ENCODE measurements at regions of chr13 and their contacts with region 1.

Region 1: DNA sequence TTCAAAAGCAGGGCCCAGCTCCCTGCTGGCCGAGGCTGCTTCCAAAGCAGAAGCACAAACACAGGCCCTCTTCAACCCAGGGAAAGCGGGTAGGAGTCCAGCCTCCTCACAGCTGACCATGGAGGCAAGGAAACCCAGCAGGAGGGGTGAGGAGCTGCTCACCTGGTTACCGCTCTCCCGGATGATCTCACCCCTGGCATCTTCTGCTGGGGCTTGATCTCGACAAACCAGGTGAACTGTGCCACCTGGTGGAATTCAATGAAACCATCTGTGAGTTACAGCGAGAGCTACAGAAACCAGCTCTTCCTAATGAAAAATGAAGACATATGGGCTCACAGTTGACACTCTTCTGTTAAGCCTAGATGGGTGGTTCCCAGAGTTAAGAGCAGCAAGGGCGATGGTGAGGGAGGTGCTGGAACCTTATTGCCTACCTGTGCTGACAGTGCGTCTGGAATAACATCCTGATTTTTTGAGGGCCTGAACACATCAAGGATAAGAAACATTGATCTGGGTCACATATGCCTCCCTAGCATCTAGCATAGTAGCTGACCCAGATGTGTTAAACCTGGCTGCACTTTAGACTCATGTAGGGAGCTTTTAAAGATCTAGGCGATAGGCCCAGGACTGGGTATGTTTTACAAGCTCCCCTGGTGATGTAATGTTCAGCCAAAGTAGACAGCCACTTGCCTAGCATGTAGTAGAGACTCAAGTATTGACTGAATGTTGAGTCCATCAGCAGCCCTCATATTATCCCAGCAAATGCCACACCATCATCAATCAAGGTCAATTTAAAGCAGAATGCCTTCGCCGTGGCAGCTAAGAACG is 6.1 kb downstream of the DHRS12 start:
- DNase-seq: no peak
- ATAC-seq: peak; percentile 67
- H3K4me3 ChIP-seq: no peak overlapping the region
- H3K27ac ChIP-seq: no peak overlapping the region
- H3K4me1 ChIP-seq: peaks cover 39% of the 10 kb centered on the region
- H3K27me3 ChIP-seq: no peaks in the 10 kb centered on the region
- CTCF ChIP-seq: peak; percentile 62 to 84 (median 69); a peak in 5 of 6 replicates
- EP300 ChIP-seq: no peak
- POLR2A ChIP-seq: no peak
- RAD21 ChIP-seq: peak; percentile 93

Region 2: GRCh38 chr13:51262501-51263211 is 535.2 kb before region 1 on chr13:
- CTCF ChIA-PET with region 1: interaction called, 17 read pairs
- POLR2A ChIA-PET with region 1: no interaction called
- RAD21 ChIA-PET with region 1: interaction called, 4 read pairs
- SMC1A ChIA-PET with region 1: interaction called, 5 read pairs
- in situ Hi-C with region 1: no loop called
- intact Hi-C with region 1: no loop called
- DNase-seq: no peak
- ATAC-seq: peak; percentile 79
- H3K4me3 ChIP-seq: no peak overlapping the region
- H3K27ac ChIP-seq: no peak overlapping the region
- H3K4me1 ChIP-seq: no peaks in the 10 kb centered on the region
- H3K27me3 ChIP-seq: 0 out of 4 replicates have a peak, but pooled peaks cover 0 to 3% of the 10 kb centered on the region in 2 experiments
- CTCF ChIP-seq: peak in 2 of 3 experiments; percentile 27 to 34; a peak in 3 of 6 replicates
- EP300 ChIP-seq: no peak
- POLR2A ChIP-seq: no peak
- RAD21 ChIP-seq: 0 out of 2 replicates have a peak, but pooled peaks have one; percentile 22

Region 3: DNA sequence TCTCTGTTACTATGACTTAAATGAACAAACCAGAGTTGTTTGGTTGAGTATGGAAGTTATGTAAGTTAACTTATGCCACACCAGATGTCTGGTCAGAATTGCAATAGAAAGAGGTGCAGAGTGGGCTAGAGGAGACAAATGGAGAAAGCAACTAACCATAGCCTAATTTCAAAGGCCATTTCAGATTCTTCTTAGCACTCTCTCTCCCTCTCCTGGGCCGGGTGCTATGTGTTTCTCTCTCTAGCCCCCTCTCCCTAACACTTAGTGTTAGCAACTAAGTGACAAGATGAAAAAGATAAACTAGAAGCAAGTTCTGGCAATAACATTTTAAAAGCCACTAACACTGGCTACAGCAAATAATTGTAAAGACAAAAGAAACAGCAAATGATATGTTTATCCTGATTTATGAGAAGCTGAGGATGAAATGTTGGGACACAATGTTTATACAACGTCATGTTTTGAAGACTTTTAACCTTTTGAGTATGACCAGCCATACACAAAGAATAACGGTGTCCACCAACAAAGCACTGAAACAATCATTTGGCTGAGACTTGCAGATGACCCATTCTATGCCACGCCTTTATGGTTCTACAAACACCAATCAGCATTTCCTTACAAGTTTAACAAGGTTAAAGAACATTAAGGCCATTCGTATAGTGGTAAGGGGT is 439.8 kb before region 1 on chr13:
- CTCF ChIA-PET with region 1: interaction called, 3 read pairs
- POLR2A ChIA-PET with region 1: no interaction called
- RAD21 ChIA-PET with region 1: no interaction called
- SMC1A ChIA-PET with region 1: interaction called, 11 read pairs
- in situ Hi-C with region 1: no loop called
- intact Hi-C with region 1: no loop called
- DNase-seq: no peak
- ATAC-seq: no peak
- H3K4me3 ChIP-seq: no peak overlapping the region
- H3K27ac ChIP-seq: no peak overlapping the region
- H3K4me1 ChIP-seq: no peaks in the 10 kb centered on the region; the same call in 1 of the 2 replicates
- H3K27me3 ChIP-seq: no peaks in the 10 kb centered on the region
- CTCF ChIP-seq: no peak
- EP300 ChIP-seq: no peak
- POLR2A ChIP-seq: no peak
- RAD21 ChIP-seq: no peak

Region 4: DNA sequence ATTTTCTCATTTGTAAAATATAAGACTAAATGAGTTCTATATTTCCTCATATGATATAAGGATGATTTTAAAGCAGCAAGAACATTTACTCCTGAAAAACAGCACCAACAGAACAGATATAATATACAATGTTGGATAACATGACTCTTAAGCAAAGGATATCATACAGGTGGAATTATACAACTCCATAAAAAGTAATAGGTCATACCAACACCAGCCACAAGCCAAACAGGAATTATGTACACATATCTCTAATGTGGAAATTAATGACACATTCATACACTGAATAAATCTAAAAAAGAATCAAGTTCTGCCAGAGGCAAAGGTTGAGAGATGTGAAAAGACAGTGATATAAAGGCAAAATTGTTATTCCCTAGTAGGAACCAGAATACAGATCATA is 370.9 kb before region 1 on chr13:
- CTCF ChIA-PET with region 1: interaction called, 100 read pairs
- POLR2A ChIA-PET with region 1: no interaction called
- RAD21 ChIA-PET with region 1: interaction called, 14 read pairs
- SMC1A ChIA-PET with region 1: interaction called, 31 read pairs
- in situ Hi-C with region 1: no loop called
- intact Hi-C with region 1: no loop called
- DNase-seq: no peak
- ATAC-seq: no peak
- H3K4me3 ChIP-seq: no peak overlapping the region
- H3K27ac ChIP-seq: no peak overlapping the region
- H3K4me1 ChIP-seq: peaks cover 17% of the 10 kb centered on the region
- H3K27me3 ChIP-seq: no peaks in the 10 kb centered on the region
- CTCF ChIP-seq: no peak
- EP300 ChIP-seq: no peak
- POLR2A ChIP-seq: no peak
- RAD21 ChIP-seq: no peak

Region 5: GRCh38 chr13:51452361-51453206 is 345.3 kb before region 1 on chr13 and contains the start of gene INTS6:
- CTCF ChIA-PET with region 1: interaction called, 22 read pairs
- POLR2A ChIA-PET with region 1: interaction called, 8 read pairs
- RAD21 ChIA-PET with region 1: interaction called, 34 read pairs
- SMC1A ChIA-PET with region 1: interaction called, 55 read pairs
- in situ Hi-C with region 1: no loop called
- intact Hi-C with region 1: loop called (anchors 2 kb)
- DNase-seq: peak; percentile 92
- ATAC-seq: peak; percentile 84
- H3K4me3 ChIP-seq: peak within 1 kb of the TSS; percentile 97
- H3K27ac ChIP-seq: peak within 1 kb of the TSS; percentile 97
- H3K4me1 ChIP-seq: peaks cover 5% of the 10 kb centered on the region; the same call in 1 of the 2 replicates
- H3K27me3 ChIP-seq: no peaks in the 10 kb centered on the region
- CTCF ChIP-seq: no peak
- EP300 ChIP-seq: no peak
- POLR2A ChIP-seq: peak; percentile 100
- RAD21 ChIP-seq: no peak
- polyA plus RNA-seq, gene INTS6: 7.2 to 10.4 TPM

Region 6: DNA sequence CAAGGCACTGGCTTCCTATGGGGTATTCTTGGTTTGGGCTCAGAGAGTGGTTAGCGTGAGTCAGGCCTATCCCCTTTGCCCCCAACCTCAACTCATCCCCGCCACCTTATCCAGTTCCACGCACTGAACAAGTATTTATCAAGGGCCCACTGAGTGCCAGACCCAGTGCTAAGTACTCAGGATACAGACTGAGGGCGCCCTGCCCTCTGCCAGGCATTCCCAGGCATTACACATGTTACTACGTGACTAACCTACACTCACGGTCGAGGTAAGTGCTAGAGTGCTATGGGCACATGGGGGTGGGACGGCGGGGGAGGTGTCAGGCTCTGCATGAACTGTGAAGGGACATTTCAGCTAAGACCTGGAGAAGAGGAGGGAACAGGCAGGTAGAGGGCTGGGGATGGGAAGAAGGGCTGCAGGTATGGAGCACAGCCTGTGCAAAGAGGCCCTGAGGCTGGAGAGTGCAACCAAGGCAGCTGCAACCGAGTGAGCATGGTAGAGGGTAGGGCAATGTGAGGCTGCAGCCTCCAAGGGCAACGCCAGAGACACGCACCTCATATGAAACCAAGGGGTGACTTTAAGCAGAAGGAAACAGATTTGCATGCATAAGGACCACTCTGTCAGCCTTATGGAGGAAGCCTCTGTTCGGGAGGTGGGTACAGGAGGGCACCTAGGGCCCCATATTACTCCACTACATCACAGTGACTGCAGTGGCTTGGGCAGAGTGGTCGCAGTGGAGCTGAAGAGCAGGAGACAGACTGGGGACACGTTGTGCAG is 16.4 kb before region 1 on chr13:
- CTCF ChIA-PET with region 1: interaction called, 14 read pairs
- POLR2A ChIA-PET with region 1: interaction called, 3 read pairs
- RAD21 ChIA-PET with region 1: interaction called, 9 read pairs
- SMC1A ChIA-PET with region 1: interaction called, 13 read pairs
- in situ Hi-C with region 1: no loop called
- intact Hi-C with region 1: no loop called
- DNase-seq: no peak
- ATAC-seq: peak; percentile 86
- H3K4me3 ChIP-seq: no peak overlapping the region
- H3K27ac ChIP-seq: no peak overlapping the region
- H3K4me1 ChIP-seq: peaks cover 5% of the 10 kb centered on the region; the same call in 1 of the 2 replicates
- H3K27me3 ChIP-seq: no peaks in the 10 kb centered on the region
- CTCF ChIP-seq: peak; percentile 38 to 61 (median 57); a peak in 4 of 6 replicates
- EP300 ChIP-seq: no peak
- POLR2A ChIP-seq: no peak
- RAD21 ChIP-seq: peak; percentile 66

Region 7: DNA sequence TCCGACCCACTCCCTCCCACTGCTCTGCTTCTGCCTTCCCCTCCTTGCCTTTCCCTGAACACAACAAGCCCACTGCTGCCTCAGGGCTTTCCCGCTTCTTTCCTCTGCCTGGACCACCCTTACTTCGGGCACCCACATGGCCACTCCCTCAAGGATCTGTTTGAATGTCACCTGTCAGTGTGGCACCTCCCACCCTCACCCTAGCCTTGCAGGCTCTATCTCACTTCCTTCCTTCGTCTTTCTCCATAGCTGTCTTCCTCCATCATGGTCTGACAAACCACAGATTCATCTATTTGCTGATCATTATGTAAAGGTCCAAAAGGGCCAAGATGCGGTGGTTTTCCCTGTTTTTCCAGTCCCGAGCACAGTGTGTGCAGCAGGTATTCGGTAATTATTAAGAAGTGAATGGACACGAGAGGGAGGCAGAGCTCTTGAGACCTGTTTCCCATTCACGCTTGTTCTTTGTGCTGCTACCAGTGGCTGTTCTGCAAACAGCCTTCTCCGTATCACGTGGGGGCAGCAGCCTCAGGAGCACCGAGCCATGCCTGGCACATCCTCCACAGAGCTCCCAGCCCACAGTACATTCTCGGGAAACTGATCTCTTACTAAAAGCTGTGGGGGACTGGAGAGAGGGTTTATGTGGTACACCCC is 114.1 kb after region 1 on chr13:
- CTCF ChIA-PET with region 1: no interaction called
- POLR2A ChIA-PET with region 1: no interaction called
- RAD21 ChIA-PET with region 1: no interaction called
- SMC1A ChIA-PET with region 1: no interaction called
- in situ Hi-C with region 1: no loop called
- intact Hi-C with region 1: no loop called
- DNase-seq: no peak
- ATAC-seq: peak; percentile 26
- H3K4me3 ChIP-seq: no peak overlapping the region
- H3K27ac ChIP-seq: no peak overlapping the region
- H3K4me1 ChIP-seq: peaks cover 6% of the 10 kb centered on the region; the same call in 1 of the 2 replicates
- H3K27me3 ChIP-seq: peaks cover 0 to 4% of the 10 kb centered on the region in 2 experiments; a peak in 2 of 4 replicates
- CTCF ChIP-seq: no peak; a peak in 1 of 6 replicates
- EP300 ChIP-seq: no peak
- POLR2A ChIP-seq: no peak
- RAD21 ChIP-seq: no peak

Measured in GM12878 (cell line).